CD4-positive, alpha-beta memory T cell (primary cell): ENCODE measurements at regions of chr20 and their contacts with region 1.

Region 1: GRCh38 chr20:13221673-13222318 is 722 bp downstream of the ISM1 start:
- DNase-seq: peak; percentile 73 to 80 (median 78)
- H3K4me3 ChIP-seq: peak overlapping the region; percentile 52 to 60
- H3K4me3 Mint-ChIP-seq: peak overlapping the region; percentile 85 to 95 (median 88)
- H3K27ac ChIP-seq: peak overlapping the region; percentile 43
- H3K27ac Mint-ChIP-seq: peak overlapping the region; percentile 71 to 93 (median 89)
- H3K4me1 ChIP-seq: peaks cover 20% of the 10 kb centered on the region
- H3K4me1 Mint-ChIP-seq: peaks cover 7 to 31% (median 16%) of the 10 kb centered on the region in 4 donors
- H3K27me3 ChIP-seq: peaks cover 12% of the 10 kb centered on the region
- H3K27me3 Mint-ChIP-seq: peaks cover 6 to 20% of the 10 kb centered on the region in 2 donors

Region 2: DNA sequence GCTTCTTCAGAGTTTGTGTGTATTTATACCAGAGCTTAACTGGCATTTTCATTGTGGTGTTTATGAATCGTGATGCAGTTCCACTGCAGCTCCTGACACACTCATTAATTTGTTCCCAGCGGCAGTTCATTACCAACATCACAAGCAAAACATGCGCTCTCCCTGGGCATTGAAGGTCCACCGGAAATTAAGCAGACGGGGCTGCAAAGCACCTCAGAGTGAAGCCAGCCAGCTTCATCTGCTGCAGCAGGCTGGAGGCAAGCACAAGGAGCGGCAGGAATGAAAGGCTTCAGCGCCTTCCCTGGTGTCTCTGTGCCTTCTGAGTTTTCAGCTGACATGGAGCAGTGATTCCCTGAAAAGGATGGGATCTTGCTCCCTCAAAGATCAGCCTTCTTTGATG is 459.1 kb before region 1 on chr20:
- CTCF ChIA-PET with region 1: no interaction called
- POLR2A ChIA-PET with region 1: no interaction called
- intact Hi-C with region 1: no loop called
- DNase-seq: no peak
- H3K4me3 ChIP-seq: no peak overlapping the region
- H3K4me3 Mint-ChIP-seq: no peak overlapping the region
- H3K27ac ChIP-seq: no peak overlapping the region
- H3K27ac Mint-ChIP-seq: no peak overlapping the region
- H3K4me1 ChIP-seq: no peaks in the 10 kb centered on the region
- H3K4me1 Mint-ChIP-seq: no peaks in the 10 kb centered on the region
- H3K27me3 ChIP-seq: no peaks in the 10 kb centered on the region
- H3K27me3 Mint-ChIP-seq: no peaks in the 10 kb centered on the region

Region 3: GRCh38 chr20:13200767-13201500 is 20.9 kb before region 1 on chr20:
- CTCF ChIA-PET with region 1: no interaction called
- POLR2A ChIA-PET with region 1: no interaction called
- intact Hi-C with region 1: no loop called
- DNase-seq: no peak
- H3K4me3 ChIP-seq: no peak overlapping the region
- H3K4me3 Mint-ChIP-seq: no peak overlapping the region
- H3K27ac ChIP-seq: no peak overlapping the region
- H3K27ac Mint-ChIP-seq: no peak overlapping the region
- H3K4me1 ChIP-seq: no peaks in the 10 kb centered on the region
- H3K4me1 Mint-ChIP-seq: peaks cover 0 to 5% (median 1%) of the 10 kb centered on the region in 4 donors
- H3K27me3 ChIP-seq: no peaks in the 10 kb centered on the region
- H3K27me3 Mint-ChIP-seq: peaks cover 0 to 2% of the 10 kb centered on the region in 2 donors

Region 4: GRCh38 chr20:13243826-13244376 is 22.1 kb after region 1 on chr20:
- CTCF ChIA-PET with region 1: interaction called, 3 read pairs
- POLR2A ChIA-PET with region 1: interaction called, 56 read pairs
- intact Hi-C with region 1: loop called (anchors 1 kb)
- DNase-seq: no peak
- H3K4me3 ChIP-seq: no peak overlapping the region
- H3K4me3 Mint-ChIP-seq: no peak overlapping the region
- H3K27ac ChIP-seq: no peak overlapping the region
- H3K27ac Mint-ChIP-seq: no peak overlapping the region
- H3K4me1 ChIP-seq: peaks cover 28% of the 10 kb centered on the region
- H3K4me1 Mint-ChIP-seq: peaks cover 24 to 41% (median 31%) of the 10 kb centered on the region in 4 donors
- H3K27me3 ChIP-seq: no peaks in the 10 kb centered on the region
- H3K27me3 Mint-ChIP-seq: no peaks in the 10 kb centered on the region

Region 5: DNA sequence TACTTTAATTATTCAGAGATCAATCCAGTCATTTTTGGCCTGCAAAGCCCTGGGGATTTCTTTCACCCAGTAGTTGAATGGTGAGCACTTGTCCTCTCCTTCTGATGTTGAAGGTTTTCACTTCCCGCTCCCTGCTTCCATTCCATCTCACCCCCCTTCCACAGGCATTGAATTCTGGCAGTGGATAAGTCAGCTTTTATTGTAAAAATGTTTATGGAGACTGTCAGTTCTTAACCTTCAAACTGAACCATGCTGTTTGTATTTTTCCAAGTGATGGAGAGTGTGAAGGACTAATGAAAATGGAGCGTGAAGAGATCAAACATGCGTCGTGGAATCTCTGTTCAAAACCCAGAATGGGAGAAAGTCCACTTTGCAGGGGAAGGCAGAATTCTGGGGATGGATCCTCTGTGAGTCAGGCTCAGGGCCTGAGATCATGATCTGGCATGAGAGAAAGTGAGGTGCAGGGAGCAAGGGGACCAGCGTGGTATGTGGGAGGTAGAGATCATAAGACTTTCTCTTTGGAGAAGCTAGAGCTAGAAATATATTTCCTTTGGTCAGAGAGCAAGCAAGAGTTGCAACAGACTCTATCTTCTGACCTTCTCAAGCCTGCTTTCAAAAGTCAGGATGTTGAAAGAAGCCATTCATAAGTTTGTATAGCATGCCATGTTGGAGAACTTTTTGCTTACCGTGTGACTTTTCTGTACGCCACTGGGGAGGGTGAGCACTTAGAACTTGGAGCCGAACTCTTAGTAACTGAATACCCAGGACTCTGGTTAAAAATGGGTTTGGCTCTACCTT is 29.5 kb after region 1 on chr20:
- CTCF ChIA-PET with region 1: interaction called, 4 read pairs
- POLR2A ChIA-PET with region 1: interaction called, 56 read pairs
- intact Hi-C with region 1: loop called (anchors 1 kb)
- DNase-seq: no peak
- H3K4me3 ChIP-seq: no peak overlapping the region
- H3K4me3 Mint-ChIP-seq: peak overlapping the region in 2 of 8 donors; percentile 17 to 34
- H3K27ac ChIP-seq: no peak overlapping the region
- H3K27ac Mint-ChIP-seq: peak overlapping the region in 6 of 7 donors; percentile 22 to 76 (median 59)
- H3K4me1 ChIP-seq: peaks cover 36% of the 10 kb centered on the region
- H3K4me1 Mint-ChIP-seq: peaks cover 28 to 53% (median 38%) of the 10 kb centered on the region in 4 donors
- H3K27me3 ChIP-seq: no peaks in the 10 kb centered on the region
- H3K27me3 Mint-ChIP-seq: no peaks in the 10 kb centered on the region

Region 6: DNA sequence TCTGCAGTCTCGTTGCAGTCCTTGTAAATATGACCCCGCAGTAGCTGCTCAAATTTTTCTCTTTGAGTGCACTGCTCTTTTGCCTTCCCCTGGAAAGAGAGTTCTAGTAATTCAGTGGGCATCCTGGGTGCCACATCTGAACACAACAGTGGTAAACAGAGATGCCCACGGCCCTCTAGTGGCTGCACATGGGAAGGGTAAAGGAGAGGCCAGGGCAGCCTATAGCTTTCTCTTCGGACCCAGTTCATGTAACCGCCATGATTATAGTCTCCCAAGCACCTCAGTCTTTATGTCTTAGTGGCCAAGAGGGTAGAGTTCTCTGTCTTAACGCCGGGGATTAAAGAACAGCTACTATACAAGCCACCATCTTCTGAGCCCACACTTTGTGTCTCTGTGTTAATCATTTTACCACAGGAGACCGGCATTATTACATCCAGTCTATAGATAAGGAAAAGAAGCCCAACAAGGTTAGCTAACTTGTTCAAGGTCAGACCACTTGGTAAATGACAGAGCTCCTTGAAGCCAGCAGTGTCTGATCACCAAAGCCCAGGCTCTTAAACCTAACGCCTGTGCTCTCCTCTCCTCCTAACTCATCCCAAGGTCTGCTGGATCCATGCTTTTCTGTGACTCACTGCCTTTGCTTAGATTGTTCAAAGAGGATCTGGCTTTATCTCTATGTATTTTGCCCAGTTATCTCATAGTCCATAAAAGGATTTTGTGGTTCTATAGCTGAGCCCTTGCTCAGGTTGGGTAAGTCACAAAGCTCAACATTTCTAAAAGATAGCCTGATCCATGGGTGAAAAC is 81.1 kb after region 1 on chr20:
- CTCF ChIA-PET with region 1: interaction called, 6 read pairs
- POLR2A ChIA-PET with region 1: no interaction called
- intact Hi-C with region 1: loop called (anchors 2 kb)
- DNase-seq: peak; percentile 22 to 49 (median 24)
- H3K4me3 ChIP-seq: no peak overlapping the region
- H3K4me3 Mint-ChIP-seq: no peak overlapping the region
- H3K27ac ChIP-seq: no peak overlapping the region
- H3K27ac Mint-ChIP-seq: no peak overlapping the region
- H3K4me1 ChIP-seq: no peaks in the 10 kb centered on the region
- H3K4me1 Mint-ChIP-seq: no peaks in the 10 kb centered on the region
- H3K27me3 ChIP-seq: no peaks in the 10 kb centered on the region
- H3K27me3 Mint-ChIP-seq: peaks cover 0 to 2% of the 10 kb centered on the region in 2 donors

Region 7: DNA sequence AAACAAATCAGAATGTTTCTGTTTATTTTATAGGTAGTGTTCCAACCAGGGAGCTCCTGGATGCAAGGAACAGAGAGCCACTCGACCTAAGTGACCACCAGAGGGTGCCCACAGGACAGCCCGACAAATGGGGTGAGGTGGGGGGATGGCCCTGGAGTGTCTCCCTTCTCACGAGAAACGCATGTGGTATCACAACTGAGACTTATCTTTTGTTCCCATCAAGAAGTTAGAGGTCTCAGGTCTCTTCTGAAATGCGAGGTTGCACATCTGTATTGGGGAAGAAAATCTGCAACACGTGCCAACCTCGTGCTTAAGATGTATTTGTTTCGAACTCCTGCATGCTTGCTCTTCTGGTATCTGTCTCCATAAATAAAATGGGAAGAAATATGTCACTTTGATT is 103.2 kb after region 1 on chr20:
- CTCF ChIA-PET with region 1: no interaction called
- POLR2A ChIA-PET with region 1: no interaction called
- intact Hi-C with region 1: no loop called
- DNase-seq: no peak
- H3K4me3 ChIP-seq: no peak overlapping the region
- H3K4me3 Mint-ChIP-seq: no peak overlapping the region
- H3K27ac ChIP-seq: no peak overlapping the region
- H3K27ac Mint-ChIP-seq: no peak overlapping the region
- H3K4me1 ChIP-seq: no peaks in the 10 kb centered on the region
- H3K4me1 Mint-ChIP-seq: peaks cover 0 to 4% (median 3%) of the 10 kb centered on the region in 4 donors
- H3K27me3 ChIP-seq: peaks cover 5% of the 10 kb centered on the region
- H3K27me3 Mint-ChIP-seq: peaks cover 1 to 3% of the 10 kb centered on the region in 2 donors